Activated T-helper 2 cell treated with anti-CD3 and anti-CD28 coated beads, Interferon-gamma antibody, Interleukin-2, Interleukin-4, amounts not matched to agents 10 μg/mL and 5 μg/mL and 100 μg/mL, durations not matched to agents 14 hours and 24 hours and 36 hours (primary cell): ENCODE measurements at regions of chr21 and their contacts with region 1.

Region 1: GRCh38 chr21:14533504-14534428 is 12.3 kb downstream of the SAMSN1 start:
- DNase-seq: no peak
- H3K4me3 Mint-ChIP-seq: peak overlapping the region; percentile 86
- H3K27ac Mint-ChIP-seq: peak overlapping the region; percentile 99
- H3K4me1 Mint-ChIP-seq: peaks cover 72% of the 10 kb centered on the region
- H3K27me3 Mint-ChIP-seq: no peaks in the 10 kb centered on the region

Region 2: DNA sequence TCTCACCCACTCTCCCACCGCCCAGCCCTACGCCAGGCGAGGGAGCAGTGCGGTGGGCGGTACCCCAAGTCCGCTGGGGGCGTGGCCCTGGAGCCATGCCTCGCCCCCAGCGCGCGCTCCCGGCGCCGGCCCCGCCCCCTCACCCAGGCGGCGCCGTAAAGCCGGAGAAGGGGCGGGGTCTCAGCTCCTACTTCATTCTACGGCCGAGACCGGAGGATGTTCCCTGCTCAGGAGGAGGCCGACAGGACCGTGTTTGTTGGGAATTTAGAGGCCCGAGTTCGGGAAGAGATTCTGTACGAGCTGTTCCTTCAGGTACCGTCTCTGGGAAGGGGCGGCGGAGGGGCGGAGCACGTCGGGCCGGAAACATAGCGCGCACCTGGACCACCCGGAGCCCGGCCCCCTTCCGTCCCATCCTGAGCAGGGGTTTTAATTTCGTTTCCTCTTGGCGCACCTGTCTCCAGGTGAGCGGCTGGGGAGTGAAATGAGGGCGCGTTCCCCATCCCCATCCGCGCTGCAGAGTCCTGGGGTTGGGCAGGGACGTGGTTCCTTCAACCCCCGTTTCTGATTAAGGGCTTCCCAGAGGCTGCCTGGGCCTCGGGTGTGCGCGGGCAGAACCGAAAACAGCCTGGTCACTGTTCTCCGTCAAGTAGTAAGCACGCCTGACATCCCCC is 317.7 kb before region 1 on chr21 and contains the start of gene RBM11:
- intact Hi-C with region 1: no loop called
- DNase-seq: peak; percentile 62
- H3K4me3 Mint-ChIP-seq: peak within 1 kb of the TSS; percentile 79
- H3K27ac Mint-ChIP-seq: no peak within 1 kb of the TSS
- H3K4me1 Mint-ChIP-seq: peaks cover 6% of the 10 kb centered on the region
- H3K27me3 Mint-ChIP-seq: peaks cover 8% of the 10 kb centered on the region
- total RNA-seq, gene RBM11: 0.21 and 0.50 TPM in 2 replicates

Region 3: GRCh38 chr21:14361958-14362357 is 171.8 kb before region 1 on chr21:
- intact Hi-C with region 1: no loop called
- DNase-seq: no peak
- H3K4me3 Mint-ChIP-seq: no peak overlapping the region
- H3K27ac Mint-ChIP-seq: no peak overlapping the region
- H3K4me1 Mint-ChIP-seq: no peaks in the 10 kb centered on the region
- H3K27me3 Mint-ChIP-seq: peaks cover 14% of the 10 kb centered on the region

Region 4: DNA sequence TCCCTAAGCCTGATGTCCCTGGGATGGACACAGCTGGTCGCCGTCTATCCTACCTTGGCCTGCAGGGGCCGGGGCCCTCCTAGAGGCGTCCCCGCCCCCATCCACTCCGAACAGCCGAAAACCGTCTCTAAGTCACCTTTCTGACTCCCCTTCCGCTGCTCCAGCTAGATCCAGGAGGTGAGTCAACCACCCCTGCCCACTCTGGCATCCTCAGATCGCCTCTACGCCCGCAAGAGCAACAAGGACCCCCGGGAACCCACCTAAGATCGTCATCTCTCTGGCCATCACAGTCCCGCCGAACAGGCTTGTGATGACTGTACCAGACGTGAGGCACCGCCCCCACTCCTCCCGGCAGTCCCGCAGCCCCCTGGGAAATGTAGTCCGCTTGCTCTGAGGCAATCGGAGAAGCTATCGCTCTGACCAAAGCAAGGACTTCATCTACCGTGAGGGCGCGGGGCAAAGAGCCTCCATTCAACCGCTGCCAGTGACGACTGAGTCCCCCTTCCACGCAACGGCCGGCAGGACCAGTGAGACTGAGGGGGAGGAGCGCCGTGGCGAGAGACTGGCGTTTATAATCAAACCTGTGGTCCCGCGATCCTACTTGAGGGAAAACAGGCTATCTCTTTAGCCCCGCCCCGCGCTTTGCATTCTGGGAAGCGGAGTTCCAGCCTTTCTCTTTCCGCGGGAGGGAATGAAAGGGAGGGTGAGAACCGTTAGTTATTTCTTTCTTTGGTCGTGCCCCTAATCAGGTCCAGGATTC is 150.8 kb before region 1 on chr21 and contains the start of gene HSPA13:
- intact Hi-C with region 1: loop called (anchors 5 kb)
- DNase-seq: peak; percentile 99
- H3K4me3 Mint-ChIP-seq: peak within 1 kb of the TSS; percentile 98
- H3K27ac Mint-ChIP-seq: peak within 1 kb of the TSS; percentile 98
- H3K4me1 Mint-ChIP-seq: peaks cover 34% of the 10 kb centered on the region
- H3K27me3 Mint-ChIP-seq: peaks cover 3% of the 10 kb centered on the region
- total RNA-seq, gene HSPA13: 40.6 and 47.6 TPM in 2 replicates

Region 5: DNA sequence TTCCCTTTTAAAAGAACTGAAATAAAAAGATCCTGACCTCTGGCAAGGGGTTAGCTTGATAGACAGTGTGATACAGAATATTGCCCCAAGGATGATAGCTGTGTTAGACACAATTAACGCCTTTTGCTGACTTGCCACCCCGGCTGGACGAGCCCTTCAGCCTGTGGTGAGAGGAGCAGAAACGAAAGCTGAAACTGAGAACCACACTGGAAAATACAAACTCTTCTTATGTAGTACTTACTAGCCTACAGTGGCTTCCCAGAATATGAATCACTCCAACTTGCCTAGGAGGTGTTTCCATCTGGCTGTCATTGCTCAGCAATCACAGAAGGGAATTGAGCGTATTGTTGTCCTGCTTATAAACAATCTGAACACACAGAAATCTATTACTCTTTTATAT is 10.5 kb before region 1 on chr21:
- intact Hi-C with region 1: loop called (anchors 1 kb)
- DNase-seq: no peak
- H3K4me3 Mint-ChIP-seq: peak overlapping the region; percentile 71
- H3K27ac Mint-ChIP-seq: peak overlapping the region; percentile 91
- H3K4me1 Mint-ChIP-seq: peaks cover 52% of the 10 kb centered on the region
- H3K27me3 Mint-ChIP-seq: no peaks in the 10 kb centered on the region

Region 6: DNA sequence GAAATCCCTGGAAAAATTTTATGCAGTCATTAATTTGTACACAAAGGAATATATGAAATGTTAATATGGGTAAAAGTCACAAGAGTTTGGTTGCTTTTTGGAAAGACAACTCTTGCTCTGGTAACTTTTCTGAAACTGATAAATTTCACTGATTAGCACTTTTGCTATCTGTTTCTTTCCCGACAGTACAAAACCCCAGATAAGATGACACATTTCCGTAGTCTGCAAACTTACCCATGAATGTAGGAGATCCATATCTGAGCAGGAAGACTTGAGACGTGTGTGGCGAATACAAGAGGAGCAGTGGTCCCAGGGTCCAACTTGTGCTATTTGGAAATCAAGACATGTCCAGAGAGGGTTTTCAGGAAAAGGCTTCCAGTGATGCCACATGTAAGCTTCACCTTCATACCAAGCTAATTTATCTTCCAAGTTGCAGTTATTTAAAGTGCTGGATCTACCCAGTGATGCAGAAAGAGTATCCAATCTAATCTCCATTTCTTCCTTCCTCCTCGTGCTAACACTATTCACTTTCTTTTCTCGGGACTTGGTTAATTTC is 48.2 kb after region 1 on chr21:
- intact Hi-C with region 1: loop called (anchors 2 kb)
- DNase-seq: peak; percentile 40
- H3K4me3 Mint-ChIP-seq: peak overlapping the region; percentile 35
- H3K27ac Mint-ChIP-seq: peak overlapping the region; percentile 70
- H3K4me1 Mint-ChIP-seq: peaks cover 50% of the 10 kb centered on the region
- H3K27me3 Mint-ChIP-seq: no peaks in the 10 kb centered on the region

Region 7: GRCh38 chr21:14675774-14676530 is 142.2 kb after region 1 on chr21:
- intact Hi-C with region 1: loop called (anchors 5 kb)
- DNase-seq: no peak
- H3K4me3 Mint-ChIP-seq: peak overlapping the region; percentile 52
- H3K27ac Mint-ChIP-seq: peak overlapping the region; percentile 97
- H3K4me1 Mint-ChIP-seq: peaks cover 47% of the 10 kb centered on the region
- H3K27me3 Mint-ChIP-seq: no peaks in the 10 kb centered on the region